ENCODE measurements at regions of chr5 and their contacts with region 1.

Region 1: DNA sequence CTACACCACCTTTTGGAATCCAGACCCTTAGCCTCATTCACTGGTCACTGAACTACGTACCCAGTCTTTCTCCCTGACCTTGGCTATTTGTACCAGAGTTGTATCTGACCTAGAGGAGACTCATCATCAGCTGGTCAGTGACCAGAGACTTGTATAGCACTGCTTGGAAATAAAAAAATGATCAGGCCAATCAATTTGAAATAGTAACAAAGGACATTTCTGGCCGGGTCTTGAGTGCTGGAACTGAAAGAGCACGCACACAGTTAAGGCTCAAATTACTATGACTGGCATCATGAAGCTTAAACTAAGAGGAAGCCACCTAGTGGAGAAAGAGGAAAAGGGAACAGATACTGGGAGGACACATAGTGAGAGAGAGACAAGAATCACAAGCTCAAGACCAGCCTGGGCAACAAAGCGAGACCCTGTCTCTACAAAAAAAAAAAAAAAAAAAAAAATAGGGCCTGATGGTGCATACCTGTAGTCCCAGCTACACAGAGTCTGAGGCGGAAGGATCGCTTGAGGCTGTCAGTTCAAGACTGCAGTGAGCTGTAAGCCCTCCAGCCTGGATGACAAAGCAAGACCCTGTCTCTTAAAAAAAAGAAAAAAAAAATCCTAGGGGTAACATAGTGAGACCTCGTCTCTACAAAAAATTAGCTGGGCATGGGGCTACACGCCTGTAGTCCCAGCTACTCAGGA is 12.8 kb upstream of the SRP19 start:
- DNase-seq: peak; percentile 28
- H3K4me3 Mint-ChIP-seq: no peak overlapping the region
- H3K27ac Mint-ChIP-seq: no peak overlapping the region
- H3K4me1 Mint-ChIP-seq: peaks cover 4% of the 10 kb centered on the region
- H3K27me3 Mint-ChIP-seq: peaks cover 14% of the 10 kb centered on the region

Region 2: GRCh38 chr5:112669328-112669963 is 178.8 kb before region 1 on chr5:
- CTCF ChIA-PET with region 1: no interaction called
- POLR2A ChIA-PET with region 1: no interaction called
- DNase-seq: no peak
- H3K4me3 Mint-ChIP-seq: no peak overlapping the region
- H3K27ac Mint-ChIP-seq: no peak overlapping the region
- H3K4me1 Mint-ChIP-seq: no peaks in the 10 kb centered on the region
- H3K27me3 Mint-ChIP-seq: peaks cover 14% of the 10 kb centered on the region

Region 3: GRCh38 chr5:112860929-112861637 is 12.8 kb after region 1 on chr5 and contains the start of gene SRP19:
- CTCF ChIA-PET with region 1: interaction called, 19 read pairs
- POLR2A ChIA-PET with region 1: no interaction called
- DNase-seq: peak; percentile 95
- H3K4me3 Mint-ChIP-seq: peak within 1 kb of the TSS; percentile 98
- H3K27ac Mint-ChIP-seq: peak within 1 kb of the TSS; percentile 97
- H3K4me1 Mint-ChIP-seq: peaks cover 40% of the 10 kb centered on the region
- H3K27me3 Mint-ChIP-seq: peaks cover 13% of the 10 kb centered on the region
- total RNA-seq, gene SRP19: 51.9 to 64.3 TPM

Measured in activated CD4-positive, alpha-beta T cell treated with anti-CD3 and anti-CD28 coated beads, Interleukin-2, amount 10 ng/mL, durations not matched to agents 7 days and 5 days (primary cell).